ENCODE measurements at regions of chr17 and their contacts with region 1.

Region 1: DNA sequence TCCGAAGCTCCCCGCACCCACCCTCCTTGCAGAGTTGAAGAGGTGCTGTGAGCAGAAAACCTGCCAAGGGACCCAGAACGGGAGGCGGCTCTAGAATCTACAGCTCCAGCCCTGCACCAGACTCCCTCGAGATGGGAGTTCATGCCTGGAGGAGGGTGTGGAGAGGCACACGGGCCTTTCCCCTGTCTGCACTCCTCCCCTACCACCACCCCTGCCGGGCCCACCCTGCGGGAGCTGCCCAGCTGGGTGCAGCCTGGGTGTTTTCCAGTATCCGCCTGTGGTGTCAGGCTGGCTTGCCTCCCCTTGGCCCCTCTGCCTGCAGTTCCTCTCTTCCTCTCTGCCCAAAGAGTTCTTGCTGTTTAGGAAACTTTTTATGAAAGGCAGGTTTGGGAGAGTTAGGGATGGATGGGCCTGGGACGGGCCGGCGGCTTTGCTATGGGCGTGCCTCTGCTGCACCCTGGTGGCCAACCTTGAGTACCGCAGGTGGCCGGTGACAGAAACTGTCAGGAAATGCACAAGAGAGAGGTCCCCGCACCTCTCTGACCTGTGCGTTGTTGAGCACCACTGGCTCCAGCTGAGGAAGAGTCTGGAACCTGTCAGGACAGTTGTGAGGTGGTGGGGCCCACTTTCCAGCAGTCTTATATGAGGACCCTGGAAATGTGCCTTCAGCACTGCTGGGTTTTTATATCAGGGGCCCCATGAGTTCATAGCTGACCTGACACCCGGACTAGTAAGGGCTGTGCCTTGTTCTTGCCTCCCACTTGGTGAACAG is 354.1 kb downstream of the SEC14L1 start:
- DNase-seq: peak; percentile 89

Region 2: DNA sequence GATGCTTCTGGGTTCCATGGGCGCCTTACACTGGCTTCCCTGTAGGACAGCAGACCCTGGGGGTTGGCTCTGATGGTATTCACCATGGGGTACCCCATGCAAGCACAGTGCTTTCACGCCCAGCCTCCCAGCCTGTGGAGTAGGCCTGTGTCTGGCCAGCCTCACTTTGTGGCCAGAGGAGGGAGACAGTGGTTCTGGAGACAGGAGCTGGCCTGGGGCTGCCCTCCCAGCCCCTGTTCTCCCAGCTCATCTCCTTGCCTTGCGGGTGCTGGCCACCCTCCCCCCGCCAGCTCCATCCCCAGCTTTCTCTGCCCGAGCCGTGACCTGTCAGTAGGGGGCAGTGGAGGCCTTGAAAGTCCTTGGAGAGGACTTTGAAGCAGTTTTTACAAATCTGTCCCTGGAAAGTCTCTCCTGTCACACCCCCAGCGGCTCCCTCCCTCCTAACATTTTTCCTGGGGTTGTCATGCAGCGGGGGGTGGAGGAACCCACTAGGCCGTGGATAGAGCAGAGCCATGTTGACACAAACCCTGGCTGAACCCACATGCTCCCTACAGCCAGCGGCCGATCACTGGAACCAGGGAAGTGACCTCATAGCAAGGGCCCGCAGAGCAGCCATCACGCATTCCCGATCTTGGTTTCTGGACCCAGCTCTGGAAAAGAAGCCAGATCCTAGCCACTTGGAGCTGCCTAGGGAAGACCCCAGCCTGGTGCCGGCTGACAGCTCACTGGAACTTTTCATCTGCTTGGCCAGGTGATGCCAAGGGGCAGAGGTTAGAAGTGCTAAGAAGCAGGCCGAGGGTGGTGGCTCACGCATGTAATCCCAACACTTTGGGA is 64.7 kb before region 1 on chr17:
- CTCF ChIA-PET with region 1: interaction called, 14 read pairs
- POLR2A ChIA-PET with region 1: interaction called, 3 read pairs
- DNase-seq: peak; percentile 78

Region 3: DNA sequence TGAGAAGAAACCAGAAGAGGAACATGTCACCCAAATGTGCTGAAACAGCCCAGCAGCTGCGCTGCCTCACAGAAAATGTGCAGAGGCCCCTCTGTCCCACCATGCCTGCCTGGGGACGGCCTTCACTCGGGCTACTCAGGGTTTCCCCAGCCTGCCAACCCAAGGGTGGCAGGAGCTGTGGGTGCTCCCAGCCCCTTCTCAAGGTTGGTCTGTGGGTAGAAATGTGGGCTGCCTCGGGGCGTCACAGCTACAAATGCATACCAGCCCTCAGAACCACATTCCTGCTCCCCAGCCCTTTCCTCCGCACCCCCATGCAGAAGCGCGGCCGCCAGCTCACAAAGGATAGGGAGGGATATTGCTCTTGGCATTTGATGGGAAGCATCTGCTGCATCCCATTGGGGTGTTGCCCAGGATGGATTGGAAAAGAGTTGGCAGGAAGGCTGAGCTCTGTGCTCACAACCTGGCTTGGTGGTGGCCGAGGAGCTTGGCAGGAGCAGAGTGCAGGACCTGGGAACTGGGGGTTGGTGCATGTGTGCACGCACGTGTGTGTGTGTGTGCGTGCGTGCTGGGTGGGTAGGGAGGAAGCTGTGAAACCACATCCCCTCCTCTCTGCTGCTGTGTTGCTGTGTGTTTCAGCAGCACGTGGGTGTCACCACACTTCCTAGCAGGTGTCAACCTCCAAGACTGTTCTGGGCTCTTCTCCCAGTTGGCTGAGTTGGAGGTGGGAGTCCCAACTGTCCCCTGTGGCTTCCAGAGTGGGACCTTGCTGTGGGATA is 49.7 kb before region 1 on chr17:
- CTCF ChIA-PET with region 1: no interaction called
- POLR2A ChIA-PET with region 1: no interaction called
- DNase-seq: no peak

Region 4: GRCh38 chr17:77516902-77517301 is 22.1 kb after region 1 on chr17:
- CTCF ChIA-PET with region 1: no interaction called
- POLR2A ChIA-PET with region 1: no interaction called
- DNase-seq: no peak

Measured in HEK293T (cell line).